ENCODE measurements at regions of chr14 and their contacts with region 1.

Region 1: DNA sequence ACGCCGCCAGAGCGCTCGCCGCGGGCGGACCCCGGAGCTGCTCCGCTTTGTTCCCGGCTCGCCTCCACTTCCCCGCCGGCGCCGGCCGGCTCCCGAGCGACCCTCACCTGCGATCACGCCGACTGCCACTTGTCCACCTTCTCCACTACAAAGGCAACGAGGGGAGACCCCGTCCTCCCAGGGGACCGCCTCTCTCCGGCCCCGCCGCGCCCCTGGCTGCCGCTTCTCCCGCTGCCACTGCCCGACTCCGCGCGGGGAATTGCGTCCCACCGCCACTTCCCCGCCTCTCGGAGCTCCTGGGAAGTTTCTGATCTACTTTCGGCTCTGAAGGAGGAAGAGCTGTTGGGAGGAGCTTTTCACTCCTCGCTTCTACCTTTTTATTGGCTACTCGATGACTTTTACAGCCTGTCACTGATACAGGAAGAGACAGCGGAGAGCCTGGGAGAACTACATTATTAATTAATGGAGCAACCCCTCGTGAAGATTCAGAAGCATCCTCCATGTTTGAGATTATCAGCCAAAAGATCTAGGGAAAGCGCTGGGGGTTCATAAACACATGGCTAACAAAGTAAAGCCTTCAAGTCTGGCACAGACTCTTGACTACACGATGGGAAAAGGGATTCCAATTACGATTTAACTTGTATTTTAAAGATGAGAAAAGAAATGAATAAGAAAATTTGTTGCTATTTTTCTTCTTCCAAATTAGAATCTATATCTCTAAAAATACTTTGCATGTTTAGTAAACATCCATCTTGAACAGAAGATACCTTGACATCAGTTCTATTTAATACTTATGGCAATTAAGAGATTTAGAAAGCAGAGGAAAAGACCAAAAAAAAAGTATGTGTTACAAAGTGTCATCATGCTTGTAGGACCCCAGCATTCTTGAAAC is at the start of gene BAZ1A:
- DNase-seq: peak; percentile 96
- H3K4me3 ChIP-seq: peak within 1 kb of the TSS; percentile 88
- H3K27ac ChIP-seq: peak within 1 kb of the TSS; percentile 98
- H3K4me1 ChIP-seq: peaks cover 14% of the 10 kb centered on the region
- H3K27me3 ChIP-seq: no peaks in the 10 kb centered on the region
- CTCF ChIP-seq: no peak
- total RNA-seq, gene BAZ1A: 70.3 and 71.5 TPM in 2 replicates

Region 2: GRCh38 chr14:34461334-34462131 is 413.7 kb before region 1 on chr14:
- CTCF ChIA-PET with region 1: no interaction called
- POLR2A ChIA-PET with region 1: interaction called, 13 read pairs
- intact Hi-C with region 1: no loop called
- DNase-seq: peak; percentile 49
- H3K4me3 ChIP-seq: peak overlapping the region; percentile 87
- H3K27ac ChIP-seq: peak overlapping the region; percentile 87
- H3K4me1 ChIP-seq: peaks cover 33% of the 10 kb centered on the region
- H3K27me3 ChIP-seq: no peaks in the 10 kb centered on the region
- CTCF ChIP-seq: no peak

Region 3: DNA sequence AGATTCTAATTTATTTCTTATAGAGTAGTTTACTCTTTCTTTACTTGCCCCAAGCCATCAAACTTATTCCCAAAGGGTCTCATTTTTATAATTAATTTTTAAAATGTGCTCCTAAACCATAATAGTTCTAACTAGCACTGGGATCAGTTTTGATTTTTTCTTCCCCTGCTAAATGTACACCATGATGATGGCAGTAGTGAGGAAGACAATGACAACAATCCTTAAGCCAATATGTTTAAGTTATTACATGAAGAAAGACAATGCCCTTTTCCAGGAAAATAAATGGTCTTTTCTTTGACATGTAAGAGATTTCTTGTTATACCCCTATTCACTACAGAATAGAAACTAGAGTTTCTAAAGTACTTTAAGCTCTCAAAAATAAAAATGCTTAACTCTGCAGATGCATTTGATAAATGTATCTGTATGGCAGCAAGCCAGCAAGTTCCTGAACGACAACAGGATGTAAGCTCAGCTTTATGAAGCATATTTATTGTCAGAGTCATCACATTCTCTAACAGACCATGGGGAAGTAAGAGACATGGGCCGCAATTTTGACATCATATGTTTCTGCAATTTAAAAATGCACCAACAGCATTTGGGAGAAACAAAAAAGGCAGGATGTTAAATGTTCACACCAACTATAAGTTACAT is 209.4 kb before region 1 on chr14:
- CTCF ChIA-PET with region 1: no interaction called
- POLR2A ChIA-PET with region 1: no interaction called
- intact Hi-C with region 1: no loop called
- DNase-seq: peak; percentile 81
- H3K4me3 ChIP-seq: no peak overlapping the region
- H3K27ac ChIP-seq: peak overlapping the region; percentile 31
- H3K4me1 ChIP-seq: peaks cover 13% of the 10 kb centered on the region
- H3K27me3 ChIP-seq: no peaks in the 10 kb centered on the region
- CTCF ChIP-seq: no peak

Region 4: DNA sequence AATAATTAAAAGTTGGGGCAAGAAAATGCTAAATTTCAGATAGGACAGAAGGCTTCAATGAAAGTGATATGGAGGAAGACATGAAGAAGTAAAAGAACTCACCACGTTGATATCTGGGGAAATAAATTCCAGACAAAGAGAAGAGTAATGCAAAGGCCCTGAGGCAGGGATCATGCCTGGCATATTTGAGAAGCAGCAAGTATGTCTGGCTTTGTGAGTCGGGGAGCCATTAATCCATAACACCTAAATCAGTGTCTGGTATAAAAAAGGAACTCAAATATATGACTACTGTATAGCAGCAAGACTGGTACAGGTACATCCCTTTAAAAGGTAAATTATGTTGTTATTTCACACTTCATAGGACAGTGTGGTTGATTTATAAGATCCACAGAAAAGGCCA is 16.5 kb before region 1 on chr14:
- CTCF ChIA-PET with region 1: no interaction called
- POLR2A ChIA-PET with region 1: interaction called, 10 read pairs
- intact Hi-C with region 1: no loop called
- DNase-seq: no peak
- H3K4me3 ChIP-seq: no peak overlapping the region
- H3K27ac ChIP-seq: no peak overlapping the region
- H3K4me1 ChIP-seq: no peaks in the 10 kb centered on the region
- H3K27me3 ChIP-seq: no peaks in the 10 kb centered on the region
- CTCF ChIP-seq: no peak

Region 5: GRCh38 chr14:34912178-34912577 is 36.9 kb after region 1 on chr14:
- CTCF ChIA-PET with region 1: no interaction called
- POLR2A ChIA-PET with region 1: no interaction called
- intact Hi-C with region 1: no loop called
- DNase-seq: peak; percentile 5
- H3K4me3 ChIP-seq: no peak overlapping the region
- H3K27ac ChIP-seq: no peak overlapping the region
- H3K4me1 ChIP-seq: no peaks in the 10 kb centered on the region
- H3K27me3 ChIP-seq: no peaks in the 10 kb centered on the region
- CTCF ChIP-seq: no peak

Region 6: GRCh38 chr14:34982417-34983147 is 107.3 kb after region 1 on chr14 and contains the start of gene SRP54:
- CTCF ChIA-PET with region 1: interaction called, 3 read pairs
- POLR2A ChIA-PET with region 1: no interaction called
- intact Hi-C with region 1: loop called (anchors 2 kb)
- DNase-seq: peak; percentile 99
- H3K4me3 ChIP-seq: peak within 1 kb of the TSS; percentile 77
- H3K27ac ChIP-seq: peak within 1 kb of the TSS; percentile 99
- H3K4me1 ChIP-seq: peaks cover 24% of the 10 kb centered on the region
- H3K27me3 ChIP-seq: no peaks in the 10 kb centered on the region
- CTCF ChIP-seq: no peak
- total RNA-seq, gene SRP54: 60.2 and 60.3 TPM in 2 replicates